Colonic mucosa (tissue), 4 donors: ENCODE measurements at regions of chr4 and their contacts with region 1.

Region 1: GRCh38 chr4:1842993-1843448 is 12.9 kb downstream of the LETM1 start:
- DNase-seq: no peak
- H3K4me3 ChIP-seq: no peak overlapping the region
- H3K27ac ChIP-seq: no peak overlapping the region
- H3K4me1 ChIP-seq: no peaks in the 10 kb centered on the region
- H3K27me3 ChIP-seq: no peaks in the 10 kb centered on the region
- CTCF ChIP-seq: no peak

Region 2: GRCh38 chr4:1471443-1472147 is 371.4 kb before region 1 on chr4:
- intact Hi-C with region 1: no loop called
- DNase-seq: no peak
- H3K4me3 ChIP-seq: no peak overlapping the region
- H3K27ac ChIP-seq: no peak overlapping the region
- H3K4me1 ChIP-seq: no peaks in the 10 kb centered on the region
- H3K27me3 ChIP-seq: peaks cover 18% of the 10 kb centered on the region
- CTCF ChIP-seq: no peak

Region 3: GRCh38 chr4:2008875-2009703 is 166.1 kb after region 1 on chr4 and contains the start of gene NELFA:
- intact Hi-C with region 1: loop called (anchors 10 kb)
- DNase-seq: peak; percentile 97
- H3K4me3 ChIP-seq: peak within 1 kb of the TSS; percentile 87
- H3K27ac ChIP-seq: peak within 1 kb of the TSS; percentile 97
- H3K4me1 ChIP-seq: no peaks in the 10 kb centered on the region
- H3K27me3 ChIP-seq: no peaks in the 10 kb centered on the region
- CTCF ChIP-seq: peak; percentile 47
- total RNA-seq, gene NELFA: 25.7 to 41.5 TPM